Panc1 (cell line): ENCODE measurements at regions of chr2 and their contacts with region 1.

Region 1: GRCh38 chr2:32010670-32011484 is at the start of gene MEMO1:
- DNase-seq: peak; percentile 77
- ATAC-seq: peak; percentile 89
- H3K4me3 ChIP-seq: peak within 1 kb of the TSS; percentile 88 to 96
- H3K27ac ChIP-seq: peak within 1 kb of the TSS; percentile 100
- H3K4me1 ChIP-seq: peaks cover 23% of the 10 kb centered on the region
- H3K27me3 ChIP-seq: no peaks in the 10 kb centered on the region
- CTCF ChIP-seq: no peak
- total RNA-seq, gene MEMO1: 60.8 TPM

Region 2: GRCh38 chr2:31079665-31080064 is 931.2 kb before region 1 on chr2:
- CTCF ChIA-PET with region 1: no interaction called
- POLR2A ChIA-PET with region 1: no interaction called
- in situ Hi-C with region 1: no loop called
- intact Hi-C with region 1: no loop called
- DNase-seq: no peak
- ATAC-seq: no peak
- H3K4me3 ChIP-seq: no peak overlapping the region
- H3K27ac ChIP-seq: no peak overlapping the region
- H3K4me1 ChIP-seq: no peaks in the 10 kb centered on the region
- H3K27me3 ChIP-seq: peaks cover 2% of the 10 kb centered on the region; the same call in 1 of the 2 replicates
- CTCF ChIP-seq: peak; percentile 42

Region 3: GRCh38 chr2:31886697-31887096 is 124.2 kb before region 1 on chr2:
- CTCF ChIA-PET with region 1: interaction called, 12 read pairs
- POLR2A ChIA-PET with region 1: no interaction called
- in situ Hi-C with region 1: no loop called
- intact Hi-C with region 1: no loop called
- DNase-seq: no peak
- ATAC-seq: no peak
- H3K4me3 ChIP-seq: no peak overlapping the region
- H3K27ac ChIP-seq: no peak overlapping the region
- H3K4me1 ChIP-seq: no peaks in the 10 kb centered on the region
- H3K27me3 ChIP-seq: no peaks in the 10 kb centered on the region
- CTCF ChIP-seq: peak; percentile 50; the same call in 1 of the 2 replicates

Region 4: GRCh38 chr2:32063310-32064161 is 52.7 kb after region 1 on chr2 and contains the start of gene SPAST:
- CTCF ChIA-PET with region 1: no interaction called
- POLR2A ChIA-PET with region 1: interaction called, 10 read pairs
- in situ Hi-C with region 1: no loop called
- intact Hi-C with region 1: no loop called
- DNase-seq: peak; percentile 90
- ATAC-seq: peak; percentile 99
- H3K4me3 ChIP-seq: peak within 1 kb of the TSS; percentile 76 to 80
- H3K27ac ChIP-seq: peak within 1 kb of the TSS; percentile 88
- H3K4me1 ChIP-seq: no peaks in the 10 kb centered on the region; the same call in 1 of the 2 replicates
- H3K27me3 ChIP-seq: no peaks in the 10 kb centered on the region
- CTCF ChIP-seq: no peak; the same call in 1 of the 2 replicates
- total RNA-seq, gene SPAST: 37.8 TPM

Region 5: GRCh38 chr2:32168513-32168912 is 157.6 kb after region 1 on chr2:
- CTCF ChIA-PET with region 1: no interaction called
- POLR2A ChIA-PET with region 1: no interaction called
- in situ Hi-C with region 1: no loop called
- intact Hi-C with region 1: loop called (anchors 10 kb)
- DNase-seq: no peak
- ATAC-seq: no peak
- H3K4me3 ChIP-seq: no peak overlapping the region
- H3K27ac ChIP-seq: no peak overlapping the region
- H3K4me1 ChIP-seq: peaks cover 11% of the 10 kb centered on the region
- H3K27me3 ChIP-seq: no peaks in the 10 kb centered on the region
- CTCF ChIP-seq: no peak

Region 6: DNA sequence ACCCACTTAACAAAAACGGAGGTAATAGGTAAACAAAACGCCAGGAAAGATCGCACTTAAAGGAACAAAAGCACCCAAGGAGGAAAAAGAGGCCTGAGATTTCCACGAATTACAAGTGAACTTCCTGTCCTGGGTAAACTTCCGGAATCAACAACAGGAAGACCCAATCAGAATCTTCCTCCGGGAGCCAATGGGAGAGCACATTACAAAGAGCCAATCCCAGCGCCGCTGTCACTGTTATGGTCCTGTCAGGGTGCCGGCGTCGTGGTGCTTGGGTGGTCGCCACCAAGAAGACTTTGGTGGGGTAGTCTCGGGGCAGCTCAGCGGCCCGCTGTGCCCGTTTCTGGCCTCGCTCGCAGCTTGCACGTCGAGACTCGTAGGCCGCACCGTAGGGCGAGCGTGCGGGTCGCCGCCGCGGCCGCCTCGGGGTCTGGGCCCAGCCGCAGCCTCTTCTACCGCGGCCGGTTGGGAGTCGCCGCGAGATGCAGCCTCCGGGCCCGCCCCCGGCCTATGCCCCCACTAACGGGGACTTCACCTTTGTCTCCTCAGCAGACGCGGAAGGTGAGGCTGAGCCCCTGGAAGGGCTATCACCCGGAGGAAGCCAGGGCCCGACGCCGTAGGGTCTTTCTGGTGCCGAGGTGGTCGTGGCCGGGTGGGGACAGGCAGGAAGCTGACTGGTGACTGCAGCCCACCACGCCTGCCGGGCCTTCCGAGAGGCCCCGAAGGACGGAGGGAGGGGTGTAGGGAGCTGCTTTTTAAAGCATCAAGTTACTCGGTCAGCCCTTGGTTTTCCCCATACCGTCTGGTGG is 267.0 kb after region 1 on chr2 and contains the start of gene YIPF4:
- CTCF ChIA-PET with region 1: interaction called, 11 read pairs
- POLR2A ChIA-PET with region 1: no interaction called
- in situ Hi-C with region 1: no loop called
- intact Hi-C with region 1: no loop called
- DNase-seq: peak; percentile 83
- ATAC-seq: peak; percentile 100
- H3K4me3 ChIP-seq: peak within 1 kb of the TSS; percentile 89 to 97
- H3K27ac ChIP-seq: peak within 1 kb of the TSS; percentile 93
- H3K4me1 ChIP-seq: peaks cover 4% of the 10 kb centered on the region; the same call in 1 of the 2 replicates
- H3K27me3 ChIP-seq: no peaks in the 10 kb centered on the region
- CTCF ChIP-seq: no peak
- total RNA-seq, gene YIPF4: 45.9 TPM